ENCODE measurements at regions of chr15 and their contacts with region 1.

Region 1: DNA sequence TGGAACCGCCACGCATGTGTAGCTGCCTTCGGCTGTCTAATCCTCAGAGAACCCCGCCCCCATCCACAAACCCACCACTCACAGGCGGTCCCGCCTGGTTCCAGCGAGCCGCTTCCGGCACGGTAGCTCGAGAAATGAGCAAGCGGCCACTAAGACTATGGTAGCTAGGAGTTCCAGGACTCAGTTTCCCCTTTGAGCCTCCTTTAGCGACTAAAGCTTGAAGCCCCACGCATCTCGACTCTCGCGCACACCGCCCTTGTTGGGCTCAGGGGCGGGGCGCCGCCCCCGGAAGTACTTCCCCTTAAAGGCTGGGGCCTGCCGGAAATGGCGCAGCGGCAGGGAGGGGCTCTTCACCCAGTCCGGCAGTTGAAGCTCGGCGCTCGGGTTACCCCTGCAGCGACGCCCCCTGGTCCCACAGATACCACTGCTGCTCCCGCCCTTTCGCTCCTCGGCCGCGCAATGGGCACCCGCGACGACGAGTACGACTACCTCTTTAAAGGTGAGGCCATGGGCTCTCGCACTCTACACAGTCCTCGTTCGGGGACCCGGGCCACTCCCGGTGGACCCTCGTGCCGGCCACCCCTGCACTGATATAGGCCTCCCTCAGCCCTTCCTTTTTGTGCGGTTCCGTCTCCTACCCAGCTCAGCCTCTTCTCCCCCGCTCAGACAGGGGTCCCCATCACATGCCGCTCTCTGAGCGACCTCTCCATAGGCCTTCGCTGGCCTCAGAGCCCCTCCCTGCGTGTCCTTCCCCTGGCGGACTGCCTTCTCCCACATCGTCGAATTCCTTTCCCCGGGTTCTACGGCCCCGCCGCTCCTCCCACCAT is at the start of gene RAB11A:
- DNase-seq: peak; percentile 89
- H3K4me3 ChIP-seq: peak within 1 kb of the TSS; percentile 98
- CTCF ChIP-seq: peak; percentile 35

Region 2: DNA sequence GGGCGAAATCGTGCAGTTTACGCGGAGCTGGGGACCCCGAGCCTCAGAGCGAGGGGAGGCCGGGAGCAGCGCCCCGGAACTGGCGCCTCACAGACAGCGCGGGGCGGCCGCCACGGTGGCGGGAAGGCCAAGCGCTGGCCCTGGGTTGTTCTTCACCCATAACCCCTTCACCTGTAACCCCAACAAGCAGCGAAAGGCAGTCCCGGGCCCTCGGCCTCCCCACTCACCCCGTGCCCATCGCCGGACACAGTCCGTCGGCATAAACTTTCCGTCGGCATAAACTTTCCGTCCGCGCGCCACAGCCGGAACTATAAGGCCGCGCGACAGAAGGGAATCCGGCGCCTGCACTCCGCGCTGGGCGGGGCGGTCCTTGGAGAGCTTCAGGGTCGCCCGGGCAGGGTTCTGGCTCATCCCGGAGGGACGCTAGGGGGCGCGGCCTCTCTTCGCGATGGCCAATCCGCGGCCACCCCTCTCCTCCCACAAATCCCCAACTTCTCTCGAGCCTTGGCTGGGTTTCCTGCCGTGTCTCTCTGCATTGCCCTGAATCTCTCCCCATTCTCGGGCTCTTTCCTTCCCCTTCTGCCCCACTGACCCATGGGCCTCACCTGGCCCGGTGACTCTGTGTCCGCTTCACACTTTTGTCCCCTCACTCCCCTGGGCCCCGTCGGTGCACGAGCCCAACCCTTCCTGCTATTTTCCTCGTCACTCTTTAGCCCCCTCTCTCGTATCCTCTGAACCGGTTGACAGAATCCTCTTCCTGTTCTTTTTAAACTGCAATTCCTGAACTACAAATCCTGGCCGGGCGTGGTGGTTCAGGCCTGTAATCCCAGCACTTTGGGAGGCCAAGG is 258.2 kb before region 1 on chr15 and contains the start of gene INTS14:
- in situ Hi-C with region 1: no loop called
- DNase-seq: peak; percentile 91
- H3K4me3 ChIP-seq: peak within 1 kb of the TSS; percentile 83
- CTCF ChIP-seq: peak; percentile 42

Region 3: DNA sequence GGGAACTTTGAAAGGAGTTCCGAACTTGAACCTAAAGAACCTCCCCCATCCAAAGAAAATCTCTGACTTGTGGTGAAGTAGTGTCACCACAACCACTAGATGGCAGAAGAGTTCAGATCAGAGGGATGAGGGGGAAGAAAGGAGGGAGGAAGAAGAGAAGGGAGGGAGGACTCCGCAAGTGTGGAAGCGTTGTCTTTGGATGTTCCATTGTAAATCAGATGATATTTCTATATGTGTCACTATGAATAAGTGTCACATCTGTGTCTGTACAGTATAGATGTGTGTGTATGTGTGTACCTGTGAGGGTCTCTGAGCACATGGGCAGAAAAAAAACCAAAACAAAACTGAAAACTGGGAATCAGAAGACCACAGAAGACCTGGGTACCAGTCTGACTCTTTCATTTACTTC is 230.7 kb before region 1 on chr15:
- in situ Hi-C with region 1: loop called (anchors 25 kb)
- DNase-seq: peak; percentile 69
- H3K4me3 ChIP-seq: no peak overlapping the region
- CTCF ChIP-seq: peak; percentile 77

Region 4: GRCh38 chr15:65778269-65778668 is 91.1 kb before region 1 on chr15:
- in situ Hi-C with region 1: no loop called
- DNase-seq: no peak
- H3K4me3 ChIP-seq: no peak overlapping the region
- CTCF ChIP-seq: no peak

Region 5: DNA sequence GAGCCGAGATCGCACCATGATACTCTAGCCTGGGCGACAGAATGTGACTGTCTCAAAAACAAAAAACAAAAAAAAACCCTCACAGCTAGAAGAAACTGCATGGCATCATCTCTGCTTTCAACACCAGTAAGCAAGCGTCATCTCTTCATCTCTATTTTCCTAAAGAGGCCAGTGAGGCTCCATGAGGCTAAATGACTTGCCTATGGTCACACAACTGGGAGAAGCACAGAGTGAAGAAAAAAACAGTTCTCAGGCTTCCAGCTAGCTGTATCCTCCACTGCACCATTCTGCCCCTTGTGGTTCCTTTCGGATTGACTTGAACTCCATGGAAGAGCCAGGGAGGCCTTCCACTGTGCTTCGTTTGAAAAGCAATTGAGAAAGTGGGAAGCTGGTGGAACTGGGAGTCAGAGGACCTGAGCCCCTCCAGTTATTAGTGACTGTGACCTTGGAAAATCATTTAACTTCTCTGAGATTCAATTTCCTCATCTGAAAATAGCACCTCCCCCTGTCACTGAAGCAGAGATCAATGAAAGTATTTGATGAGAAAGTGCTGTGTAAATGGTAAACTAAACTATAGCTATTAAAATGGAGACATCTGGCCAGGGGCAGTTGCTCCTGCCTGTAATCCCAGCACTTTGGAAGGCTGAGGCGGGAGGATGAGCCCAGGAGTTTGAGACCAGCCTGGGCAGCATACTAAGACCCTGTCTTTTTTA is 45.2 kb before region 1 on chr15:
- in situ Hi-C with region 1: no loop called
- DNase-seq: peak; percentile 51
- H3K4me3 ChIP-seq: no peak overlapping the region
- CTCF ChIP-seq: peak; percentile 82

Region 6: GRCh38 chr15:65836665-65837064 is 32.7 kb before region 1 on chr15:
- in situ Hi-C with region 1: loop called (anchors 5 kb)
- DNase-seq: no peak
- H3K4me3 ChIP-seq: no peak overlapping the region
- CTCF ChIP-seq: no peak

Measured in astrocyte of the cerebellum (primary cell).